Posterior cingulate gyrus (tissue), 11 donors: ENCODE measurements at regions of chr15 and their contacts with region 1.

Region 1: DNA sequence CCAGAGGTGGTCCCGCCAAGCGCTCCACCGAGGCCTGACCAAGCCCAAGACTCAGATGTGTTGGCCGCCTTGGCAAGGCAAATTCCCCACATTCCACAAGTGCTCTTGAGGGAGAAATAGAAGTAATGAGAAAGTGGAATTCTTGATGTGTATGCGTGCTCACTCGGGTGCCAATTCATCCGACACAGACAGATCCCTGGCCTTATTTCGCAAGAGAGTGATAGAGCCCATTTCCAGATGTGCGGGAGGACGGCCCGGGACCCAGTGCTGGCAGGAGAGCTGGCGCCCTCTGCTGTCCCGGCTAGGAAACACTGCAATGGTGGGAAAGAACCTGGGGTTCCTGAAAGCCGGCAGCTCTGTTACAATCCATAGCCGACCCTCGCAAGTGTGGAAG is 76.0 kb downstream of the HMG20A start:
- DNase-seq: peak; percentile 59 to 96 (median 82)

Region 2: GRCh38 chr15:76931397-76932007 is 565.2 kb before region 1 on chr15 and contains the start of gene RCN2:
- intact Hi-C with region 1: loop called (anchors 10 kb)
- DNase-seq: peak; percentile 90 to 99 (median 96)

Region 3: DNA sequence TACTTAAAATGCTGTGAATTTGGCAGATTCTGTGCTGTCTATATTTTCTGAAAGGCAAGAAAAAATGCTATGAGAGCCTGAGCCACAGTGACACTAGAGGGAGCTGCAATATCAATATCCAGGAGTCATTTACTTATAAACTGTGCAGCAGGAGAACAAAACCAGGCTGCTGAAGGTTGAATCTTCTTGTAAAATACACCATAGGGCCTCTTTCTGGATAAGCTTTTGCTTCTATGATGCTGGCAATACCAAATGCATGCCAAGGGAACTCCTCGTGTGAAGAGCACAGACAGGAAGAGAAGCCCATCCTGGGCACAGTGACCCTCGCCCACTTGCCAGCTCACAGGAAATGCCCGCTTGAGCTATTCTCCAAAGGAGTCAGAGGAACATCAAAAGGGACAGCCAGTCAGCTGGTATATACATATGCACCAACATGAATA is 377.8 kb before region 1 on chr15:
- intact Hi-C with region 1: loop called (anchors 5 kb)
- DNase-seq: peak in 4 of 10 donors; percentile 25 to 48 (median 30)

Region 4: DNA sequence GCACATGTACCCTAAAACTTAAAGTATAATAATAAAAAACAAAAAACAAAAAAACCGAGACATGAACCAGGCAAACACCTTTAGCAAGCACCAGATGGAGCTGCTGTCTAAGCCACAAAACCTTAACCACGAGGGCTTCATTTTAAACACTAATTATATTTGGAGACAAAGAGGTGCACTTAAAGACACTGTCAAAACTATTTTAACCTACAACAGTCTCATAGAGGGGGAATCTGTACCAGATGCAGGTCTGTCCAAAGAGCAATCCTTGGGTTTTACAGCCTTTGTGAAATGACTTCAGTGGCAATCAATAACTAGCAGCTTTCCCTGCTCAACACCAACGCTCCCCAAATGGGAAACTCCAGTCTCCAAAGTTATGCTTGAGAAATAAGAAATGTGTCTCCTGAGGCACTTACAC is 310.1 kb before region 1 on chr15:
- intact Hi-C with region 1: loop called (anchors 5 kb)
- DNase-seq: no peak

Region 5: GRCh38 chr15:77419836-77420609 is 76.7 kb before region 1 on chr15 and contains the start of gene PEAK1:
- intact Hi-C with region 1: loop called (anchors 1 kb)
- DNase-seq: peak; percentile 97 to 100 (median 98)

Region 6: GRCh38 chr15:77446840-77447390 is 49.8 kb before region 1 on chr15:
- intact Hi-C with region 1: no loop called
- DNase-seq: no peak

Region 7: GRCh38 chr15:77543159-77543882 is 46.6 kb after region 1 on chr15:
- intact Hi-C with region 1: loop called (anchors 1 kb)
- DNase-seq: peak; percentile 75 to 98 (median 85)

Region 8: GRCh38 chr15:77810130-77810571 is 313.4 kb after region 1 on chr15:
- intact Hi-C with region 1: no loop called
- DNase-seq: no peak